ENCODE measurements at regions of chr1 and their contacts with region 1.

Region 1: DNA sequence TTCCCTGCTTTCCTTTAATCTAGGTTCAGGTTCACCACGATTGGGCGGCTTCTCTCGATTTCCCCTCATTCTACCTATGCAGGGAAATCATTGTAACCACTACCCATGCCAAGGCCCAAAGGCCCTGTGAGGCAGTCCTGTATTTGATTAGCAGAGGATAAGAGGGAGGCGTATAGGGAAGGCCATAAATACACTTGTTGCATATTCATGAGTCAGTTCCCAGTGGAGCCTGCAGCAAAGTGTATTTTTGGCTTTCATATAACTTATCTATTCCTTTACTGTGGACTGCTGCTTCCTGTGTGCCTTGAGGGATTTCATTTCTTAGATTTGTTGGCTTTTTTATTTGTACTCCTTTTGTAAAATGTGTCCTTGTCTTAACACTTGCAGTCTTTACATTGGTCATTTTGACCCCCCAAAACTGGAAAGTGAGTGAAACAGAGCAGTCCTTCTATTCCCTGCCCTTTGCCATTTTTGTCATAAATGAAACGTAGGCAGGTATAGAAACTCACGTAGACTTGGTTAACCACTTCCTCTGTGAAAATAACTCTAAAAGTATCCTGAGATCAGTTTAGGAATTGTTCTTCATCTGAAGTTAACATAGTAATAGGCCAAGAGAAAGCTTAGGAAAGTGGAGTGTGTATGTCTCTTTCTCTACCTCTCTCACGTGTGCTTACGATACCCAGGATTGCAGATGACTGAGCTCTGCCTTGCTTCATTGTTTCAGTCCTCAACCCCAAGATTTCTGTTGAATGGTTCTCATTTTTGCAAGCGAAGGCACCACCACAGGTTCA is 19.6 kb upstream of the KCNQ4 start:
- DNase-seq: peak; percentile 62
- ATAC-seq: peak; percentile 76
- H3K4me3 ChIP-seq: peak overlapping the region; percentile 53
- H3K27ac ChIP-seq: peak overlapping the region; percentile 85
- H3K4me1 ChIP-seq: peaks cover 42% of the 10 kb centered on the region
- H3K27me3 ChIP-seq: no peaks in the 10 kb centered on the region
- CTCF ChIP-seq: no peak
- EP300 ChIP-seq: peak; percentile 48 to 54; a peak in 1 of 4 replicates
- POLR2A ChIP-seq: no peak
- RAD21 ChIP-seq: no peak

Region 2: GRCh38 chr1:40625066-40625465 is 138.9 kb before region 1 on chr1:
- CTCF ChIA-PET with region 1: interaction called, 4 read pairs
- POLR2A ChIA-PET with region 1: no interaction called
- RAD21 ChIA-PET with region 1: no interaction called
- SMC1A ChIA-PET with region 1: interaction called, 10 read pairs
- in situ Hi-C with region 1: no loop called
- intact Hi-C with region 1: no loop called
- DNase-seq: no peak
- ATAC-seq: peak; percentile 35
- H3K4me3 ChIP-seq: no peak overlapping the region
- H3K27ac ChIP-seq: no peak overlapping the region
- H3K4me1 ChIP-seq: peaks cover 15% of the 10 kb centered on the region
- H3K27me3 ChIP-seq: no peaks in the 10 kb centered on the region
- CTCF ChIP-seq: peak in 2 of 3 experiments; percentile 44 to 45; a peak in 3 of 6 replicates
- EP300 ChIP-seq: no peak
- POLR2A ChIP-seq: no peak
- RAD21 ChIP-seq: peak; percentile 20; the same call in 1 of the 2 replicates

Region 3: GRCh38 chr1:40691538-40692428 is 72.2 kb before region 1 on chr1 and contains the start of gene NFYC:
- CTCF ChIA-PET with region 1: interaction called, 10 read pairs
- POLR2A ChIA-PET with region 1: interaction called, 17 read pairs
- RAD21 ChIA-PET with region 1: interaction called, 19 read pairs
- SMC1A ChIA-PET with region 1: interaction called, 38 read pairs
- in situ Hi-C with region 1: no loop called
- intact Hi-C with region 1: loop called (anchors 5 kb)
- DNase-seq: peak; percentile 94
- ATAC-seq: peak; percentile 94
- H3K4me3 ChIP-seq: peak within 1 kb of the TSS; percentile 95
- H3K27ac ChIP-seq: peak within 1 kb of the TSS; percentile 98
- H3K4me1 ChIP-seq: peaks cover 32% of the 10 kb centered on the region
- H3K27me3 ChIP-seq: no peaks in the 10 kb centered on the region
- CTCF ChIP-seq: peak in 1 of 3 experiments; percentile 10; a peak in 1 of 6 replicates
- EP300 ChIP-seq: peak in 1 of 2 experiments; percentile 45; a peak in 2 of 4 replicates
- POLR2A ChIP-seq: peak; percentile 99
- RAD21 ChIP-seq: no peak
- polyA plus RNA-seq, gene NFYC: 4.3 to 6.9 TPM

Region 4: DNA sequence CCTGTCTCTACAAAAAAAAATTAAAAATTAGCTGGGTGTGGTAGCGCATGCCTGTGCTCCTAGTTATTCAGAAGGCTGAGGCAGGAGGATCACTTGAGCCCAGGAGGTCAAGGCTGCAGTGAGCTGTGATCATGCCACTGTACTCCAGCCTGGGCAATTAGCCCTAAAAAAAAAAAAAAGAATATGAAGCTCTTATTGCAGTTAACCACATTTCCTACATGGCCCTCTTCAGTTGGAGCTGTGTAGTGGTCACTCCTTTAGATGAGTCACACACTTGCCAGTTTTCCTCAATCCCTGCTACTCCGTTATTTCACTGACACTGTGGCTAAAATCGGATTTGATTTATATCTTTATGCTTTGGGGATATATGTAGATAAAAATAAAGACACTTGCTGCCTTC is 60.6 kb before region 1 on chr1:
- CTCF ChIA-PET with region 1: interaction called, 6 read pairs
- POLR2A ChIA-PET with region 1: no interaction called
- RAD21 ChIA-PET with region 1: interaction called, 5 read pairs
- SMC1A ChIA-PET with region 1: interaction called, 13 read pairs
- in situ Hi-C with region 1: no loop called
- intact Hi-C with region 1: loop called (anchors 5 kb)
- DNase-seq: no peak
- ATAC-seq: no peak
- H3K4me3 ChIP-seq: no peak overlapping the region
- H3K27ac ChIP-seq: peak overlapping the region; percentile 71
- H3K4me1 ChIP-seq: peaks cover 46% of the 10 kb centered on the region
- H3K27me3 ChIP-seq: no peaks in the 10 kb centered on the region
- CTCF ChIP-seq: no peak
- EP300 ChIP-seq: no peak
- POLR2A ChIP-seq: no peak
- RAD21 ChIP-seq: no peak

Region 5: DNA sequence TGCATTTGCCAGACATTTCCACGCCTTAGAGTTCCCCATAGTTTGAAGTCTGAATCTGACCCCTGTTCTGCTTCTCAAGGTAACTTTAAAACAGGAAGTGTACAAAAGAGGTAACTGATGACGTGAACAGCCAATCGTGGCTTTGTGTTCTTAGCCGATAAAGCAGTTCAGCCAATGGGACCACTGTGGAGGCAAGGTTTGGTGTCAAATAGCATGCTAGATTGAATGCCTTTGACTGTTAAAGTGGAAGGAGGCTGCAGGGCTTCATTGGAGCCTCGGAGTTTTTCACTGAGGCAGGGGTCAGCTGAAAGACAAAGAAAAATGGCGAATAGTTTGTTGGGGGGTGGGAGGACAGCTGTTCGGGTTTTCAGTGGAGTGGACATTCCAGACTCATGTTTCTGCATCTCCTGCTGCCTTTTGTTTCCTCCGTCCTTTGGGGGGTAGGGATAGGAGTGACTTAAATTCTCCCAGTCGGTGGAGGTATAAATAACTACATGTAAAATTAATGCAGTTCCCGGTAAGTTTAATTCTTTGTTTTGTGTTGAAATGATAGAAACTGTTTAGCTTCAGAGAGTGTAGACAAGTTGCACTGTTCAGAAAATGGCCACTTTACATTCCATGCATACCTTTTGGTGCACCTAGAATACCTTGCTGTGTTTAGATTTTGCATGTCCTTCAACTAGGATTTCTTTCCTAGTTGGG is 54.7 kb before region 1 on chr1:
- CTCF ChIA-PET with region 1: interaction called, 3 read pairs
- POLR2A ChIA-PET with region 1: interaction called, 7 read pairs
- RAD21 ChIA-PET with region 1: interaction called, 10 read pairs
- SMC1A ChIA-PET with region 1: interaction called, 8 read pairs
- in situ Hi-C with region 1: no loop called
- intact Hi-C with region 1: no loop called
- DNase-seq: peak; percentile 96
- ATAC-seq: peak; percentile 96
- H3K4me3 ChIP-seq: peak overlapping the region; percentile 77
- H3K27ac ChIP-seq: peak overlapping the region; percentile 82
- H3K4me1 ChIP-seq: peaks cover 22% of the 10 kb centered on the region
- H3K27me3 ChIP-seq: no peaks in the 10 kb centered on the region
- CTCF ChIP-seq: no peak
- EP300 ChIP-seq: no peak
- POLR2A ChIP-seq: peak; percentile 68
- RAD21 ChIP-seq: no peak

Region 6: DNA sequence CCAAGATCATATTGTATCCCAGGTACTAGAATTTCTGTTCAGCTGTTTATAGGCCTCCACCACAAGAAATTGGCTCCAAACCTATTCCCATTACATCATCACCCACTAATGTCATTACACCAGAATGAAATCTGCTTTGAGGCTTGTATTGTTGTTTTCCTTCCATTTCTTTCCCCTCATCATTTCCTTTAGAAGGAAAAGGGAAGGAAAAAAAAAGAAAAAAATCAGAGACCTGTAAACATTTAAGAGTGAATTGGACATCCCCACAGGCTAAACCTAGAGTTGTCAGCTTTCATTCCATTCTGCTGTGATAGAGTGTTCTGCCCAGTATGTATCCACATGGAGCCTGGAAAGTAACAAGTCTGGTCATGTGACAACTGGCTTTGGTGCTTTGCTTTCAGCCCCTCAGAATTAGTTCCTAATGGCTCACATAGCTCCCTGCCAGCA is 27.8 kb before region 1 on chr1:
- CTCF ChIA-PET with region 1: no interaction called
- POLR2A ChIA-PET with region 1: interaction called, 10 read pairs
- RAD21 ChIA-PET with region 1: no interaction called
- SMC1A ChIA-PET with region 1: interaction called, 6 read pairs
- in situ Hi-C with region 1: no loop called
- intact Hi-C with region 1: no loop called
- DNase-seq: no peak
- ATAC-seq: no peak
- H3K4me3 ChIP-seq: no peak overlapping the region
- H3K27ac ChIP-seq: no peak overlapping the region
- H3K4me1 ChIP-seq: no peaks in the 10 kb centered on the region
- H3K27me3 ChIP-seq: no peaks in the 10 kb centered on the region
- CTCF ChIP-seq: no peak
- EP300 ChIP-seq: no peak
- POLR2A ChIP-seq: no peak
- RAD21 ChIP-seq: no peak

Region 7: GRCh38 chr1:40849801-40850592 is 86.1 kb after region 1 on chr1:
- CTCF ChIA-PET with region 1: interaction called, 21 read pairs
- POLR2A ChIA-PET with region 1: no interaction called
- RAD21 ChIA-PET with region 1: interaction called, 4 read pairs
- SMC1A ChIA-PET with region 1: interaction called, 7 read pairs
- in situ Hi-C with region 1: no loop called
- intact Hi-C with region 1: no loop called
- DNase-seq: peak; percentile 62
- ATAC-seq: peak; percentile 92
- H3K4me3 ChIP-seq: no peak overlapping the region
- H3K27ac ChIP-seq: no peak overlapping the region
- H3K4me1 ChIP-seq: peaks cover 12% of the 10 kb centered on the region
- H3K27me3 ChIP-seq: no peaks in the 10 kb centered on the region; a peak in 1 of 4 replicates
- CTCF ChIP-seq: peak; percentile 82 to 94 (median 86)
- EP300 ChIP-seq: no peak
- POLR2A ChIP-seq: no peak
- RAD21 ChIP-seq: peak; percentile 91

Region 8: DNA sequence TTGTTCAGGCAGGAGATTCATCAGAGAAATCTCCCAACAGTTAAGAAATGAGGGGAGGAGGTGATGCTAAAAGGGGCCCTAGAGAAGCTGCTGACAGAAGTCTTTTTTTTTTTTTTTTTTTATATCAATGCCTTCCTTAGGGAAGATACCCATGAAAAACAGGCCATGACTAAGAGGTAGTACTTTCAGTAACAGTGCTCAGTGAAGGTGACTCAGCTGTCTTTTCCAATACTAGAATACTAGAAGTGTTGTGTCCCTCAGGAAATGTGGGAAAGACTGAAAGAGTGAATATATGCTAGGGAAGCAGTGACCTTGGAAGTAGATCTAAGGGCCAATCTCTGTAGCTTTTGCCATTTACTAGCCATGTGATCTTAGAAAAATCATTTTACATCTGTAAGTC is 310.0 kb after region 1 on chr1:
- CTCF ChIA-PET with region 1: no interaction called
- POLR2A ChIA-PET with region 1: no interaction called
- RAD21 ChIA-PET with region 1: no interaction called
- SMC1A ChIA-PET with region 1: no interaction called
- in situ Hi-C with region 1: no loop called
- intact Hi-C with region 1: no loop called
- DNase-seq: no peak
- ATAC-seq: no peak
- H3K4me3 ChIP-seq: no peak overlapping the region
- H3K27ac ChIP-seq: no peak overlapping the region
- H3K4me1 ChIP-seq: no peaks in the 10 kb centered on the region
- H3K27me3 ChIP-seq: no peaks in the 10 kb centered on the region
- CTCF ChIP-seq: no peak
- EP300 ChIP-seq: no peak
- POLR2A ChIP-seq: no peak
- RAD21 ChIP-seq: no peak

Measured in GM12878 (cell line).